Posterior vena cava (tissue), 2 donors: ENCODE measurements at regions of chr2 and their contacts with region 1.

Region 1: GRCh38 chr2:128027801-128028667 is at the start of gene SAP130:
- DNase-seq: peak; percentile 99
- total RNA-seq, gene SAP130: 17.2 to 18.6 TPM

Region 2: DNA sequence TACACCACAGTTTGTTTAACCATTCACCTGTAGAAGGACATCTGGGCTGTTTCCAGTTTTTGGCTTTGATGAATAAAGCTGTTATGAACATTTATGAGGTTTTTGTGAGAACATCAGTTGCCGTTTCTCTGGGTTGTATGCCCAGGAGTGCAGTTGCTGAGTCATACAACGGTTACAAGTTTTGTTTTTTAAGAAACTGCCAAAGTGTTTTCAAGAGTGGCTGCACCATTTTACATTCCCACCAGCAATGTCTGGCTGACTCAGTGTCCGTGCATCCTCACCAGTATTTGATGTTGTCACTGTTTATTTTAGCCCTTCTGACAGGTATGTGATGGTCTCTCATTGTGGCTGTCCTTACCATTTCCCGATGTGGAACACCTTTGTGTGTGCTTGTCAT is 430.1 kb before region 1 on chr2:
- intact Hi-C with region 1: loop called in 1 of 2 experiments (anchors 5 kb)
- DNase-seq: no peak

Region 3: DNA sequence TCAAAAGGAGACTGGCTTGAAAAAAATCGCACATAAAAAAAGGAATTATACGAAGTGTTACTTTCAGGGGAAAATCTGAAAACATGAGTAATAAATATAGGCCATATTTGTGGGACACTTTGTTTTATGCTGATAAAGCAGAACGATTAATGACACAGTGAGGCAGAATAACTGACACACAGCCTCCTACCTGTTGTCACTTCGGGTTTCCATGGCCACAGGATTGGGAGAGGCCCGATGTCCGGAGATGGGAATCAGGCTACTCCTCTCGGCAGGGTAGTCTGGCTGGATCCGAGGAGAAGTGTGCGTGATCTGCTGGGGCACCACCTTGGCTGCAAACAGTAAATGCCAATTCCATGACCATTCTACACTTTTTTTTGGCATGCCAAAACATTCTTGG is 31.9 kb before region 1 on chr2:
- intact Hi-C with region 1: no loop called
- DNase-seq: no peak

Region 4: GRCh38 chr2:128090945-128091725 is 63.1 kb after region 1 on chr2 and contains the start of gene UGGT1:
- intact Hi-C with region 1: loop called in 1 of 2 experiments (anchors 10 kb)
- DNase-seq: peak; percentile 99
- total RNA-seq, gene UGGT1: 43.0 to 51.0 TPM

Region 5: DNA sequence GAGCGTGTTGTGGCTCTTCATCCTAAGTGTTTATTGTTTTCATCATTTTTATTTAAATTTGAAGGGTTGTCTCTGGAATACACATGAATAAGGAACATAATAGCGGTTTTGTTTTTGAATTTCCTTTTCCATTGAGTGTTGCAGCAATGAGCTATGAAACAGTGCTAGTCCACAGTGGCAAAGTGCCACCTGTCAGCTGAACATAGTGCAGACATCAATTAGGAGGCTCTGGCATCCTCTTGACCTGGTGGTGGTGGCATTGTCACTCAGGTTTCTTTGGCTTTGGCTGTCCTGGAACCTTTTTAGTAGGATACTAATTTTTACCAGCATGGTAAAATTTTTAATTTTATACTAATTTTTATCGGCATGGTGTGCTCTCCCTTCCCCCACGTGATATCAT is 126.2 kb after region 1 on chr2:
- intact Hi-C with region 1: no loop called
- DNase-seq: no peak

Region 6: GRCh38 chr2:128178650-128179460 is 150.8 kb after region 1 on chr2:
- intact Hi-C with region 1: no loop called
- DNase-seq: peak; percentile 86